ENCODE measurements at regions of chr1 and their contacts with region 1.

Region 1: DNA sequence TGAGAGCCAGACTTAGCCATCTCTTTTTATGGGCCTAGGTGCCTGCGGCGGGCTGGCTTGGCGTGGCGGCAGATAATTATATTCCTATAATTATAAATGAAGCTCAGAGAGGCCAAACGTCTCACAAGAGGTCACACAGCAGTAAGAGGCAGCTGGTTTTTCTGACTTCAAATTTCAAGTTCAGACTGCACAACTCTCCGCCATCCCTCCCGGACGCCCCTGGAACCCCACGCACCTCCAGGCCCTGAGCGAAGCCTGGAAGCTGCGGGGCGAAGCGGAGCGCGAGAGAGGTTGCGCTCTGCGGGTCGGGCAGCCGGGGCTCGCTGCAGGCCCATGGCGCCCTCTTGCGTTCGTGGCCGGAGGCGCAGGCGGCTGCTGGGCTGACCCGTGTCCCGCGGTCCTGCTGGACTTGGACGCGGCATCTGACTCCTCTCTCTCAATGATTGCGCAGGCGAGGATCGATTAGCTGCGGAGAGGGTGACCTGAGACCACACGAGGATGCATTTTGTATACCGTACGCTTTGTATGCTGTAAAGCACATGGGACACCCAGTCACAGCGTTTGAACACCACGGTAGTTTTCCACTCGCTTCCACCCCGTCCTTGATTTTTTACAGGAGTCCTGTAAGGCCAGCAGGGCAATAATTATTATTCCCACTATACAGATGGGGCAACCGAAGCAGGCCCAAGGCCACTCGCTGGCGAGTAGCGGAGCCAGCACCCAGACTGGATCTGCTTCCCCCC is 272.7 kb downstream of the FOXD2 start:
- H3K4me3 ChIP-seq: no peak overlapping the region
- H3K27ac ChIP-seq: peak overlapping the region; percentile 77; the same call in 1 of the 2 replicates
- H3K4me1 ChIP-seq: peaks cover 6% of the 10 kb centered on the region; the same call in 1 of the 2 replicates
- CTCF ChIP-seq: peak; percentile 95

Region 2: DNA sequence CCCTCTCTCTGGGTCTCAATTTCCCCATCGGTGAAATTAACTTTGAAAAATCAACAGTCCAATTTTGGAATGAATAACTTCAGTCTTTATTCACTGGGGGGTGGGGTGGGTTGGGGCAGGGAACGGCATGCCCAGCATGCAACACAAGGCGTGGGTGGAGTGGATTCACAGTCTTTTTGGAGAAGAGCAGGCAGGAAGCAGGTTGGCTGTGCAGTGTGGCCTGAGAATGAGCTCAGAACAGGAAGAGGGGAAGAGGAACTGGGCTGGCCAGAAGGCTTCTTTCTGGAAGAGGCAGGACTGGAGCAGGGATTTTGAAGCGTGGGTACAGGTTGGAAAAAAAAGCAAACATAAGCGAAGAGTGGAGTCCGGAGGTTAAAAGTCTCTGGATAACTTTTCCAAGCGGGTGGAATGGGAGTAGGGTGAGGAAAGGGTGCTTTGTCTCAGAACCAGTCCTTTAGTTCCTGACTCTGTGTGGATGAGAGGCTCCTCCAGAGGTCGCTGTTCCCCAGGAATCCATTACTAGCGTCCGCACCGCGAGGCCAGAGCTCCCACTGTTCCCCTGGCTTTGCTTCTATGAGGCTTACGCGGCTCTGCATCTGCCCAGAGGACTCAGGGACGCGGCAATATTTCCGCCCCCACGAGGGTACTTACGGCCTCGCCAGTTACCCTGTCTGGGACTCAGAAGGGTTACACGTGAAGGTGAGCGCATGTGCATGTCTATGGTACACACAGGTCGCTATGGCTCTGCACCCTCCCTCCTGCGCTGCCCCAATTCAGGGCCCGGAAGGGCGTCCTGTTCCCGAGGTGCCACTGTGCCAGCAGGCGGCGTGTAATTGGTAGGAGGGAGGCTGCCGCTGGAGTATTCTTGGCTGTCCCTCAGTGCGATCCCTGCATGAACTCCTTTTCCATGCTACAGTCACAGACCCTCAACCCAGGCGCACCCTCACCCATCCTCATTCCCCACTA is 278.1 kb before region 1 on chr1:
- CTCF ChIA-PET with region 1: interaction called, 120 read pairs
- POLR2A ChIA-PET with region 1: interaction called, 26 read pairs
- H3K4me3 ChIP-seq: no peak overlapping the region
- H3K27ac ChIP-seq: no peak overlapping the region
- H3K4me1 ChIP-seq: no peaks in the 10 kb centered on the region
- CTCF ChIP-seq: peak; percentile 80

Region 3: GRCh38 chr1:47578026-47578720 is 132.3 kb before region 1 on chr1:
- CTCF ChIA-PET with region 1: interaction called, 11 read pairs
- POLR2A ChIA-PET with region 1: no interaction called
- H3K4me3 ChIP-seq: no peak overlapping the region
- H3K27ac ChIP-seq: peak overlapping the region; percentile 28; the same call in 1 of the 2 replicates
- H3K4me1 ChIP-seq: peaks cover 8% of the 10 kb centered on the region
- CTCF ChIP-seq: no peak

Region 4: GRCh38 chr1:47699492-47700235 is 10.8 kb before region 1 on chr1:
- CTCF ChIA-PET with region 1: interaction called, 19 read pairs
- POLR2A ChIA-PET with region 1: no interaction called
- H3K4me3 ChIP-seq: no peak overlapping the region
- H3K27ac ChIP-seq: no peak overlapping the region
- H3K4me1 ChIP-seq: no peaks in the 10 kb centered on the region; the same call in 1 of the 2 replicates
- CTCF ChIP-seq: no peak

Region 5: GRCh38 chr1:47738560-47739182 is 28.2 kb after region 1 on chr1:
- CTCF ChIA-PET with region 1: no interaction called
- POLR2A ChIA-PET with region 1: no interaction called
- H3K4me3 ChIP-seq: no peak overlapping the region
- H3K27ac ChIP-seq: no peak overlapping the region
- H3K4me1 ChIP-seq: no peaks in the 10 kb centered on the region
- CTCF ChIP-seq: no peak

Measured in HEK293 (cell line).